Activated T-helper 1 cell treated with anti-CD3 and anti-CD28 coated beads, Interleukin-12 subunit alpha, Interleukin-12 subunit beta, Interleukin-2, Interleukin-4 antibody, amounts not matched to agents 30 ng/mL and 10 ng/mL and 1 ng/mL, durations not matched to agents 14 hours and 24 hours and 36 hours (primary cell): ENCODE measurements at regions of chr1 and their contacts with region 1.

Region 1: GRCh38 chr1:150629115-150629928 is at the start of gene ENSA:
- DNase-seq: peak; percentile 94
- H3K4me3 Mint-ChIP-seq: no peak within 1 kb of the TSS
- H3K27ac Mint-ChIP-seq: no peak within 1 kb of the TSS
- H3K4me1 Mint-ChIP-seq: peaks cover 43% of the 10 kb centered on the region
- H3K27me3 Mint-ChIP-seq: peaks cover 1% of the 10 kb centered on the region
- total RNA-seq, gene ENSA: 282 and 285 TPM in 2 replicates

Region 2: GRCh38 chr1:150444232-150444631 is 185.1 kb before region 1 on chr1:
- intact Hi-C with region 1: no loop called
- DNase-seq: no peak
- H3K4me3 Mint-ChIP-seq: no peak overlapping the region
- H3K27ac Mint-ChIP-seq: peak overlapping the region; percentile 28
- H3K4me1 Mint-ChIP-seq: peaks cover 7% of the 10 kb centered on the region
- H3K27me3 Mint-ChIP-seq: no peaks in the 10 kb centered on the region

Region 3: GRCh38 chr1:150486964-150487762 is 142.2 kb before region 1 on chr1 and contains the start of gene TARS2:
- intact Hi-C with region 1: loop called (anchors 5 kb)
- DNase-seq: peak; percentile 94
- H3K4me3 Mint-ChIP-seq: peak within 1 kb of the TSS; percentile 98
- H3K27ac Mint-ChIP-seq: peak within 1 kb of the TSS; percentile 95
- H3K4me1 Mint-ChIP-seq: peaks cover 35% of the 10 kb centered on the region
- H3K27me3 Mint-ChIP-seq: no peaks in the 10 kb centered on the region
- total RNA-seq, gene TARS2: 77.3 and 77.4 TPM in 2 replicates

Region 4: DNA sequence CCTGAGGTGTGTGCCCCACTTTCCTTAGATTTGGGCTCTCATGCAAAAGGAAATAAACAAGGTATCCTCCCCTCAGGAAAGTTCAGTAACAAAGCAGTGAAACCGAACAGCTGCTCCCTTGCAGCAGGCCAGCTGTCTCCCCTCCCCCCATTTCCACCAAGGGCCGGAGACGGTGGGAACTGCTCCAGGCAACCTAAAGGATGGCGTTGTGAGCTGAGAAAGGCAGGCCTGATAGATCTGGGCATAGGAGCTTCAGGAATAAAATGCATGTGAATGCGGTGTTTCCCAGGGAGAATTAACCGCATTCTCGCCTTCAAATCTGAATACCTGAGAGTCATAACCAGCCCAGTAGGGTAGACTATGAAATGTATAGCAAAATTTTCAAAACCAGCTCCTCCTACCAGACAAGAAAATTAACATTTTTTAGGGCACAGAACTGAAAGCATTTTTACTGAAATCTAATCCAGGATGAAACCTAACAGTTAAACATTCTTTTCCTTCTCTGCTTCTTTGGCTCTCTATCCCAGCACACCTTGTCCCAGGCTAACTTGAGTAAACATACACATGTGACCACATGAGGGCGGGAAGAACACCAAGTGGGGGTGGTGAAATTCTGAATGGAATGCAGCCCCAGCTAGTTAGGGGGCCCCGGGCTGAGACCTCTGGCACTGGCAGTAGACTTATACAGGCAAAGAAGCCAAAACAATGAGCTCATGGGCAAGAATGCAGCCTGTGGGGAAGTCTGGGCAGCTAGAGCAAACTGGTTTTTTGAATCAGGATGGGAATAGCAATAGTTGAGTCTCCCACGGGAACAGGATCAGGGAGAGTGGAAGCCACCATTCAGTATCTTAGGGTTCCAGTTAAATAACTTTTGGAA is 61.4 kb before region 1 on chr1:
- intact Hi-C with region 1: no loop called
- DNase-seq: peak; percentile 56
- H3K4me3 Mint-ChIP-seq: peak overlapping the region; percentile 90
- H3K27ac Mint-ChIP-seq: peak overlapping the region; percentile 98
- H3K4me1 Mint-ChIP-seq: peaks cover 88% of the 10 kb centered on the region
- H3K27me3 Mint-ChIP-seq: no peaks in the 10 kb centered on the region

Region 5: GRCh38 chr1:150613061-150613920 is 16.0 kb before region 1 on chr1:
- intact Hi-C with region 1: loop called (anchors 1 kb)
- DNase-seq: peak; percentile 49
- H3K4me3 Mint-ChIP-seq: peak overlapping the region; percentile 53
- H3K27ac Mint-ChIP-seq: peak overlapping the region; percentile 98
- H3K4me1 Mint-ChIP-seq: peaks cover 62% of the 10 kb centered on the region
- H3K27me3 Mint-ChIP-seq: no peaks in the 10 kb centered on the region

Region 6: DNA sequence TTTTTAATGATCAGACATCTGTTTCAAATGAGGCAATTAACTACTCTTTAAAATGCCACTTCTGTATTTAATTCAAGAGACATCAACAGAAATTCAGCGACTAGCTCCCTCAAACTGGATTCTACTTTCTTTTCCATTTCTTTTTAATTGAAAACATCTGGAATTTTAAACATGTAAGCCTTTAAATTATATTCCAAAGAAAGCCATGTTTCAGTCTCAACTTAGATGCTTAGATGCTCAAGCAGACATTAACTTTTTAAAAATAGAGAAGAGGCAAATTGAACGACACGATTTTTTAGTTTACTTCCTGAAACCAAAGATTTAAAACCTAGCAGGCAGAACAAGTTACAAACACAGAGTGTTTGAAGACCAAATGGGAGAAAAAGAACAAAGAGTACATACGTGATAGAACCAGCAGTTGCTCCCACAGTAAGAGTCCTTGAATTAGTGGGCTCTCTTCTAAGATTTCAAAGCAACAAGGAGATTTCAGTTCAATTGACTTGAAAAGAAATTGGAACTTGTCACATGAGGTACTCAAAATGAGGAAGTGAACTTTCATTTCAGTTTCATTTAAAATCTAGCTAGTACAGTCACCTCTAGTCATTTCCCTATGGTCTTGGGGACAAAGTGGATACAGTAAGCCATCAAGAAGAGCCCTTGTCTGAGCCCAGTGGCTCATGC is 136.1 kb after region 1 on chr1 and contains the start of gene CTSS:
- intact Hi-C with region 1: loop called (anchors 1 kb)
- DNase-seq: no peak
- H3K4me3 Mint-ChIP-seq: peak within 1 kb of the TSS; percentile 92
- H3K27ac Mint-ChIP-seq: peak within 1 kb of the TSS; percentile 94
- H3K4me1 Mint-ChIP-seq: peaks cover 40% of the 10 kb centered on the region
- H3K27me3 Mint-ChIP-seq: peaks cover 13% of the 10 kb centered on the region
- total RNA-seq, gene CTSS: 31.7 and 34.2 TPM in 2 replicates

Region 7: DNA sequence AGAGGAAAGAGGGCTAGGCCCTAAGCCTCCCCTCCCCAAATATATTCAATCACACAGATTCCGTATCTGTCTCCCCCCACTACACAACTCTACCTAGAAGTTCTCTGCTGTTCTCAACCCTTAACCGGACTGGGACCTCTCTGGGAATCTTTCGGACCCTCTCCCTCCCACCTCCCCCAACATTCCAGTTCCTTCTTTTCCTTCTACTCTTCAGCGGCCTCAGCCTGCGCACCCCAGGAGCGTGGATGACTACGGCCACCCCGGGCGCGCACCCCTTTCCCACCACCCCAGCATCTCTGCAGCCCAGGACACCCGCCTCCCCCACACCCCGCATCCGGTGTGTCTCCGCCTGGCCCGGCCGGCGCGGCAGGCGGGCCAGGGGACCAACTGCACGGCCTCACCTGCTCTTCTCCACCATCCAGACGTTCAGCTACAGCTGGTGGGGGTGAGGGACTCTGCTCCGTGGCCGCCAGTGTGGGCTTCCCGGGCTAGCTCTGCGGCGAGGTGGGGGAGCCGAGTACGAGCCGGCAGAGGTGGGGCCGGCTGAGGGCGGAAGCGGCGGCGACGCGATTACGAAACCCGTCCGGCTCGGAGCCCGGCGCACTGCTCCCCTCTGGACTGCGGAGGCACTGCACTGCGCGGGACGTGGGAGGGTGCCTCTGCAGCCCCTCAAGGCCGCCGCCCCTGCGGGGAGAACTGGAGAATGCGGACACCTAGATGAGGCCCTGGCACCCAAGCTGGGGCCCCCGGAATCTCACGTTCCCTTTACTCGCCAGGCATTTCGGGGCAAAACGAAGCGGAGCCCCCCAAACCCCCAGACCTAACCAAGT is 430.0 kb after region 1 on chr1 and contains the start of gene CDC42SE1:
- intact Hi-C with region 1: loop called (anchors 5 kb)
- DNase-seq: peak; percentile 81
- H3K4me3 Mint-ChIP-seq: peak within 1 kb of the TSS; percentile 95
- H3K27ac Mint-ChIP-seq: peak within 1 kb of the TSS; percentile 97
- H3K4me1 Mint-ChIP-seq: peaks cover 65% of the 10 kb centered on the region
- H3K27me3 Mint-ChIP-seq: no peaks in the 10 kb centered on the region
- total RNA-seq, gene CDC42SE1: 216 and 219 TPM in 2 replicates